CD8-positive, alpha-beta memory T cell (primary cell): ENCODE measurements at regions of chr15 and their contacts with region 1.

Region 1: GRCh38 chr15:90886041-90886614 is 1.8 kb downstream of the FES start:
- DNase-seq: peak; percentile 63 to 80 (median 65)
- H3K4me3 ChIP-seq: no peak overlapping the region
- H3K4me3 Mint-ChIP-seq: peak overlapping the region in 3 of 7 donors; percentile 12 to 43 (median 25)
- H3K27ac ChIP-seq: no peak overlapping the region
- H3K27ac Mint-ChIP-seq: no peak overlapping the region
- H3K4me1 ChIP-seq: peaks cover 9% of the 10 kb centered on the region
- H3K4me1 Mint-ChIP-seq: peaks cover 10 to 27% (median 10%) of the 10 kb centered on the region in 3 donors
- H3K27me3 ChIP-seq: no peaks in the 10 kb centered on the region
- H3K27me3 Mint-ChIP-seq: peaks cover 19 to 21% of the 10 kb centered on the region in 2 donors

Region 2: GRCh38 chr15:90648137-90649070 is 237.7 kb before region 1 on chr15:
- CTCF ChIA-PET with region 1: interaction called, 34 read pairs
- POLR2A ChIA-PET with region 1: interaction called, 3 read pairs
- DNase-seq: peak; percentile 35 to 64 (median 50)
- H3K4me3 ChIP-seq: peak overlapping the region; percentile 38
- H3K4me3 Mint-ChIP-seq: peak overlapping the region in 6 of 7 donors; percentile 54 to 69 (median 59)
- H3K27ac ChIP-seq: peak overlapping the region; percentile 51
- H3K27ac Mint-ChIP-seq: peak overlapping the region in 6 of 8 donors; percentile 3 to 85 (median 62)
- H3K4me1 ChIP-seq: peaks cover 27% of the 10 kb centered on the region
- H3K4me1 Mint-ChIP-seq: peaks cover 17 to 25% (median 22%) of the 10 kb centered on the region in 3 donors
- H3K27me3 ChIP-seq: no peaks in the 10 kb centered on the region
- H3K27me3 Mint-ChIP-seq: peaks cover 8 to 9% of the 10 kb centered on the region in 2 donors

Region 3: GRCh38 chr15:90654233-90655124 is 231.6 kb before region 1 on chr15:
- CTCF ChIA-PET with region 1: interaction called, 12 read pairs
- POLR2A ChIA-PET with region 1: no interaction called
- DNase-seq: no peak
- H3K4me3 ChIP-seq: no peak overlapping the region
- H3K4me3 Mint-ChIP-seq: no peak overlapping the region
- H3K27ac ChIP-seq: no peak overlapping the region
- H3K27ac Mint-ChIP-seq: no peak overlapping the region
- H3K4me1 ChIP-seq: peaks cover 48% of the 10 kb centered on the region
- H3K4me1 Mint-ChIP-seq: peaks cover 41 to 55% (median 48%) of the 10 kb centered on the region in 3 donors
- H3K27me3 ChIP-seq: peaks cover 8% of the 10 kb centered on the region
- H3K27me3 Mint-ChIP-seq: peaks cover 25 to 30% of the 10 kb centered on the region in 2 donors

Region 4: DNA sequence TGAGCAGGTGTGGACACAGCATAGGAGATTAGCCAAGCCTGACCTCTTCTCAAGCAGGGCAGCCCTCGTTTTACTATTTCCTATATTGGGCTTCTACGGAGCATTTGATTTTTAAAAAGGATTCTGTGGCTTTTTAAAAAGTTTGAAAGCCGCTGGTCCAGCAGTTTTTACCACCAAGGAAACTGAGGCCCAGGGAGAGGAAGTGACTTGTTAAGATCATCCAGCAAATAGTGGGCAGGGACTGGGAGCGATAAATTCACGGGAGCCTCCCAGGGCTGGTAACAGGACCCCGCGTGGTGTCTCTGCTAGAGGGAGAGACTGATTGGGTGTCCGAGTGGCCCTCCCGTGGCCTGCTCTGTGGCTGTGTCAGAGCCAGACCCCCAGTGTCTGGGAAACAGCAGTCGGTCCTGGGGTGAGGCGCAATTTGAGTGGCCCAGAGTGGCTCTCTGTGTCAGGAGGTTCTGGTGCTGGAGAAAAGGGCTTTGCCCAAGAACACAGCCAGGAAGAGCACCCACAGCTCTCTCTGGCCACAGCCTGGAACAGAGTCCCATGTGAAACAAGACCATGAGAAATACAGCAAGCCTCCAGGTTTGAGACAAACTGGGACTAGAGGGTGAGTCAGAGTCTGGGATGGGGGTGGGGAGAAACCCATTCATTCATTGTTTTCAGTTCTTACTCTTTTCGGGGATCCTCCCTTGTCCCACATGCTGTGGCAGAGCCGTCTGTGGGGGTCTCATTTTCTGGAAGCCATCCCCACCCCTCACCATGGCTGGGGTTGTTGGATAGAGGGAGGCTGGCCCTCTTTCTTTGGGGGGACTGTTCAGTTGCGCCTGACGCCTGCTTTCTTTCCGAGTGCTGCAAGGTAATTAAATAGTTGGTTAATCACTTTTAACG is 13.4 kb before region 1 on chr15:
- CTCF ChIA-PET with region 1: interaction called, 10 read pairs
- POLR2A ChIA-PET with region 1: no interaction called
- DNase-seq: peak in 1 of 5 donors; percentile 30
- H3K4me3 ChIP-seq: peak overlapping the region; percentile 66
- H3K4me3 Mint-ChIP-seq: peak overlapping the region; percentile 81 to 93 (median 89)
- H3K27ac ChIP-seq: peak overlapping the region; percentile 65
- H3K27ac Mint-ChIP-seq: peak overlapping the region; percentile 70 to 99 (median 92)
- H3K4me1 ChIP-seq: peaks cover 37% of the 10 kb centered on the region
- H3K4me1 Mint-ChIP-seq: peaks cover 29 to 47% (median 41%) of the 10 kb centered on the region in 3 donors
- H3K27me3 ChIP-seq: no peaks in the 10 kb centered on the region
- H3K27me3 Mint-ChIP-seq: no peaks in the 10 kb centered on the region

Region 5: DNA sequence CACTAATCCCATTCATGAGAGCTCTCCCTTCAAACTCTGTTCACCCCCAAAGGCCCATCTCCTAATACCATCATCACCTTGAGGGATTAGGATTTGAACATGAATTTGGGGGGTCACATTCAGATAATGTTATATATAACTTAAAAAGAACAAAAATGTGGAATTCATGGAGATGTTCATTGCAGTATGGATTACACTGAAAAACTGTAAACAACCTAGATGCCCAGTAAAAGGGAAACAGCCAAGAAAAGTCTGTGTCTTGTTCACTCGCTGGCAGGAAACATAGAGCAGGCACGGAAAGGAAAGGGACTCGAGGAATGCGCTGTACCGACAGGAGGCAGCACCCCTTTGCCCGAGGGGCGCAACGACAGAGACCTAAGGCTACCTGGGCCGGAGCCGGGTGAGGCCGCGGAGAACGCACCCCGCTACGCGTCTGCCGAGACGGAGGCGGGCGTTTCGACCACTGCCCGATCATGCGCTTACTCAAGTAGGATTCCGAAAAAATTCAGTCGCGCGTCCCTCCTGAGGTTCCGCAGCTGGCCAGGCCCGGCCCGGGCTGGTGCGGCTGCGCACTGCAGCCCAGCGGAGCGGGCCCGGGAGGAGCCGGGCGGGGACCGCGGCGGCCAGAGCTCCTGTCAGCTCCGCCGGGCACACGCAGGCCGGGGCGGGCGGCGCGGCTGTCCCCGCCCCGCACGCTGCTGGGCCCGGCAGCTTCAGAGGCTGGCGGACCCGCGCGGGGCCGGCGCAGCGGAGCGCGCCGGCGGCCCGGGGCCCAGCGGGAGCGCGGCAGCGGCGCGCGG is 16.1 kb after region 1 on chr15:
- CTCF ChIA-PET with region 1: interaction called, 14 read pairs
- POLR2A ChIA-PET with region 1: interaction called, 4 read pairs
- DNase-seq: peak; percentile 59 to 81 (median 74)
- H3K4me3 ChIP-seq: peak overlapping the region; percentile 87
- H3K4me3 Mint-ChIP-seq: peak overlapping the region; percentile 86 to 93 (median 91)
- H3K27ac ChIP-seq: peak overlapping the region; percentile 84
- H3K27ac Mint-ChIP-seq: peak overlapping the region; percentile 87 to 96 (median 92)
- H3K4me1 ChIP-seq: peaks cover 20% of the 10 kb centered on the region
- H3K4me1 Mint-ChIP-seq: peaks cover 21 to 37% (median 21%) of the 10 kb centered on the region in 3 donors
- H3K27me3 ChIP-seq: no peaks in the 10 kb centered on the region
- H3K27me3 Mint-ChIP-seq: no peaks in the 10 kb centered on the region

Region 6: GRCh38 chr15:91152896-91153581 is 266.9 kb after region 1 on chr15:
- CTCF ChIA-PET with region 1: no interaction called
- POLR2A ChIA-PET with region 1: no interaction called
- DNase-seq: no peak
- H3K4me3 ChIP-seq: no peak overlapping the region
- H3K4me3 Mint-ChIP-seq: no peak overlapping the region
- H3K27ac ChIP-seq: no peak overlapping the region
- H3K27ac Mint-ChIP-seq: no peak overlapping the region
- H3K4me1 ChIP-seq: no peaks in the 10 kb centered on the region
- H3K4me1 Mint-ChIP-seq: no peaks in the 10 kb centered on the region
- H3K27me3 ChIP-seq: no peaks in the 10 kb centered on the region
- H3K27me3 Mint-ChIP-seq: peaks cover 29 to 78% of the 10 kb centered on the region in 2 donors